ENCODE measurements at regions of chr13 and their contacts with region 1.

Region 1: DNA sequence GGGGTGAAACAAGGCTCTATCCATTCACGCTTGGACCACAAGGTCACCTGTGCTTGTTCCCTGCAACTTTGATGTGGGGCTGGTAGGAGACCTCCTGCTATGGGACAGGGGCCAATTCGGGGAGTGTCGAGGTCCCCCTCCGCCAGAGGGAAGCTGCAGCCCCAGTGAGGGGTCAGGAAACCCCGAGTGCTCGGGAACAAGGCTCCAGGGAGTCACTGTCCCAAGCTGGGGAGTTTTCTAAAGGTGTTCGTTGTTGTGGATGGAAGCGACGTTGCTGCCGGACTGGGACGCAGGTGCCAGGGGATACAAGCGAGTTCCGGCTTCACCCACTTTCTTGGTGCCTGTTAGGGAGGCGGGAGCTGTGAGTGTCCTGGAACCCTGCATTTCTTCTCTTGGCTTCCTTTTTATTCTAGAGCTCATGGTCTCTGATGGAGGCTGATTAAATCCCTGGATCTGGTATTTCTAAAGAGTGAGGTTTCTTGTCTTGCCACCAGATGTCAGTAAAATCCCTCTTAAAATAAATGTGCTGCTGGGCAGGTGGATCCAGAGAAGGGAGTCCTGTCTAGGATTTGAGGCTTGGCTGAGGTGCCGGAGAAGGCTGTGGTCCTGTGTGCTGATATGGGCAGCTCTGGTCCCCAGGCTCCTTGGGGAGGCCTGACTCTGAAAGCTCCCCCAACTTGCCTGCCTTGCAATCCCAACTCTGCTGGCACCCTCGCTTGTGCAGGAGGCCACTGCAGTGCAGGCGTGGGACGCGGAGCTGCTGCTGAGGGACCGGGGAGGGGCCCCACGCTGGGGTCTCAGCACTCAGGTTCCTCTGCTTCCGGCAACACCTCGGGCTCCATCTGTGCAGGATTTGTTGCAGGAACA is 153.9 kb downstream of the TEX29 start:
- DNase-seq: peak in 1 of 2 donors; percentile 8
- H3K4me3 ChIP-seq: no peak overlapping the region
- H3K27ac ChIP-seq: no peak overlapping the region
- H3K4me1 ChIP-seq: peaks cover 0 to 6% of the 10 kb centered on the region in 2 donors
- H3K27me3 ChIP-seq: no peaks in the 10 kb centered on the region
- CTCF ChIP-seq: peak in 4 of 6 experiments; percentile 21 to 56 (median 54)
- POLR2A ChIP-seq: no peak

Region 2: GRCh38 chr13:111344471-111345191 is 129.7 kb before region 1 on chr13:
- intact Hi-C with region 1: no loop called
- DNase-seq: peak; percentile 92
- H3K4me3 ChIP-seq: no peak overlapping the region
- H3K27ac ChIP-seq: no peak overlapping the region
- H3K4me1 ChIP-seq: no peaks in the 10 kb centered on the region
- H3K27me3 ChIP-seq: no peaks in the 10 kb centered on the region
- CTCF ChIP-seq: peak in 5 of 6 experiments; percentile 17 to 64 (median 47)
- POLR2A ChIP-seq: no peak

Region 3: DNA sequence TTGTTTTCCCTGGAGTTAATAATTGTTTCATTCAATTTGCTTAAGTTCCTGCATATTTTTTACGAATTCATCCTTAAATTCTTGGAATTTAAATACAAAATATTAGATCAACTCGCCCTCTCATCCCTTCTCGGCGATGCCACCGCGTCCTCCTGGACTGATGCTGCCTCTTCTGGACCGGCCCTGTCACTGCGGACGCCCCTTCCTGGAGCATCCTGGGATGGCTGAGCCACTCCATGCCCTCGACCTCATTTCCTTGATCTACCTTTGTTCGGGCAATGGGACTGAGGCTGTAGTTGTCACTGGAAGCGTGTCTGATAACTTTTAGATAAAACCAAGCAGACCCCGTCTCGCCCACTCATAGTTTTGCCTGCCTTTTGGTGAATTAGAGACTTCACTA is 129.7 kb after region 1 on chr13:
- intact Hi-C with region 1: no loop called
- DNase-seq: no peak
- H3K4me3 ChIP-seq: no peak overlapping the region
- H3K27ac ChIP-seq: no peak overlapping the region
- H3K4me1 ChIP-seq: no peaks in the 10 kb centered on the region
- H3K27me3 ChIP-seq: no peaks in the 10 kb centered on the region
- CTCF ChIP-seq: no peak
- POLR2A ChIP-seq: no peak

Region 4: GRCh38 chr13:112447761-112448603 is 973.6 kb after region 1 on chr13:
- intact Hi-C with region 1: loop called (anchors 5 kb)
- DNase-seq: no peak
- H3K4me3 ChIP-seq: no peak overlapping the region
- H3K27ac ChIP-seq: no peak overlapping the region
- H3K4me1 ChIP-seq: no peaks in the 10 kb centered on the region
- H3K27me3 ChIP-seq: peaks cover 4% of the 10 kb centered on the region
- CTCF ChIP-seq: no peak
- POLR2A ChIP-seq: no peak

Region 5: GRCh38 chr13:112606109-112607001 is 1132.0 kb after region 1 on chr13:
- intact Hi-C with region 1: loop called (anchors 5 kb)
- DNase-seq: peak; percentile 94 to 96
- H3K4me3 ChIP-seq: peak overlapping the region in 2 of 3 donors; percentile 27 to 31
- H3K27ac ChIP-seq: peak overlapping the region; percentile 19 to 68 (median 44)
- H3K4me1 ChIP-seq: peaks cover 0 to 5% of the 10 kb centered on the region in 2 donors
- H3K27me3 ChIP-seq: no peaks in the 10 kb centered on the region
- CTCF ChIP-seq: peak; percentile 71 to 97 (median 92)
- POLR2A ChIP-seq: peak in 1 of 2 donors; percentile 46

Measured in thyroid gland (tissue), 4 donors.